Activated B cell treated with CpG ODN at 0.5 μM for 24 hours (primary cell): ENCODE measurements at regions of chr2 and their contacts with region 1.

Region 1: GRCh38 chr2:208265801-208266552 is at the start of gene PIKFYVE:
- DNase-seq: peak; percentile 85
- ATAC-seq: peak; percentile 87
- H3K4me3 Mint-ChIP-seq: peak within 1 kb of the TSS; percentile 95
- H3K27ac Mint-ChIP-seq: peak within 1 kb of the TSS; percentile 95
- H3K4me1 Mint-ChIP-seq: peaks cover 56% of the 10 kb centered on the region
- H3K27me3 Mint-ChIP-seq: no peaks in the 10 kb centered on the region
- CTCF ChIP-seq: no peak
- total RNA-seq, gene PIKFYVE: 92.2 and 106 TPM in 2 replicates

Region 2: DNA sequence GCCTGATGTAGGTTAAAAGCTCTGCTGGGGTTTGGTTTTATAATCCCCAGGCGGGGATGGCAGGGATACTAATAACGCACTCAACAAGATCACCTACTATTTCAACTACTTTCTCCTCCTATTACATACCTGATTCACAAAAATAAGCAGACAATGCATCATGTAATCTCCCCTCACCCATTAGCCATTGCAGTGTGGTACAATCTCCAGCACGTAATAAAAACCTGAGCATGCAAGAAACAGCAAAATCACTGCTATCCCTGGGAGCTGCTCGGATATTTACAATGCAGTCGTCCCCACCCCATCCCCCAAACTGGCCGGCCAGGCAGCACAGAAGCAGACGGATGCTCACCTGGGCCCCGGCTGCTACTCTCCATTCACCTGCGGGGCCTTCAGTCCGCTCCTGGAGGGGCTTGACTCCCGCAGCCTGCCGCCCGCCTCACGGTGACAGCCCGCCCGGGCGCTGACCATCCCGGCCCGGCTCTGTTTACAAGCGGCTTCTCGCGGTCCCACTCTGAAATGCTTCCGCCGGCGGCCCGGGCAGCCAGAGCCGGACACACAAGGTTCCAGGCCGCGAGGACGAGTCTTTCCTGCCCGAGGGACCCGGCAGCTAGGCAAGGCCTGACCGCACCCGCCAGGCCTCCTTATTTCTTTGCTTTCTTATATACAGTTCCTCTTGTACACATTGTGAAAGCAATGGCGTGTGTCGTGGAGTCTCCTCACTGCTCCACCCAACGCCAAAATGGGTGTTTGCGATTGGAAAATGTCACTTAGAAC is 240.8 kb before region 1 on chr2 and contains the start of gene PLEKHM3:
- CTCF ChIA-PET with region 1: no interaction called
- POLR2A ChIA-PET with region 1: no interaction called
- intact Hi-C with region 1: loop called (anchors 5 kb)
- DNase-seq: peak; percentile 76
- ATAC-seq: peak; percentile 91
- H3K4me3 Mint-ChIP-seq: peak within 1 kb of the TSS; percentile 86
- H3K27ac Mint-ChIP-seq: peak within 1 kb of the TSS; percentile 92
- H3K4me1 Mint-ChIP-seq: peaks cover 20% of the 10 kb centered on the region
- H3K27me3 Mint-ChIP-seq: no peaks in the 10 kb centered on the region
- CTCF ChIP-seq: no peak
- total RNA-seq, gene PLEKHM3: 12.0 and 12.2 TPM in 2 replicates

Region 3: DNA sequence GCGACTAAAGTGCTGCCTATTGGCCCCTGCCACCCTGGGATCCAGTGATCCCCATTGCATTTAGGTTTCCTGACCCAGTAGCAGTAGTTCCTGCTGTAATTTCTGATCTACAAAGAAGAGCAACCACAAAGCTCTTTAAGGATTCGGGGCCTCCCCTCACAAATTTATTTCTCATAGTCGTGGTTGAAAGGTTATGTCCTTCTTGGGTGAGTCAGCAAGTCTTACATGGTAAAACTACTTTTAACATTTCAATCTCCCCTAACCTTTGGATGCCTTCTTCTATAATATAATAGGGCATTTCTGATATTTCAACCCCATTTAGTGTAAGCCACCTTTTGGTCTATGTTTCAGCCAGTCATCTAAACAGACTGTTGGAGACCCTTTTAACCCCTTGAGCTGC is 15.0 kb after region 1 on chr2:
- CTCF ChIA-PET with region 1: interaction called, 6 read pairs
- POLR2A ChIA-PET with region 1: interaction called, 7 read pairs
- intact Hi-C with region 1: loop called (anchors 1 kb)
- DNase-seq: no peak
- ATAC-seq: peak; percentile 62
- H3K4me3 Mint-ChIP-seq: no peak overlapping the region
- H3K27ac Mint-ChIP-seq: peak overlapping the region; percentile 60
- H3K4me1 Mint-ChIP-seq: peaks cover 32% of the 10 kb centered on the region
- H3K27me3 Mint-ChIP-seq: no peaks in the 10 kb centered on the region
- CTCF ChIP-seq: no peak

Region 4: GRCh38 chr2:208294482-208295024 is 28.6 kb after region 1 on chr2:
- CTCF ChIA-PET with region 1: no interaction called
- POLR2A ChIA-PET with region 1: interaction called, 4 read pairs
- intact Hi-C with region 1: loop called (anchors 1 kb)
- DNase-seq: no peak
- ATAC-seq: peak; percentile 85
- H3K4me3 Mint-ChIP-seq: peak overlapping the region; percentile 52
- H3K27ac Mint-ChIP-seq: peak overlapping the region; percentile 90
- H3K4me1 Mint-ChIP-seq: peaks cover 65% of the 10 kb centered on the region
- H3K27me3 Mint-ChIP-seq: no peaks in the 10 kb centered on the region
- CTCF ChIP-seq: no peak

Region 5: GRCh38 chr2:208315081-208315788 is 49.3 kb after region 1 on chr2:
- CTCF ChIA-PET with region 1: interaction called, 8 read pairs
- POLR2A ChIA-PET with region 1: interaction called, 80 read pairs
- intact Hi-C with region 1: loop called (anchors 1 kb)
- DNase-seq: no peak
- ATAC-seq: peak; percentile 54
- H3K4me3 Mint-ChIP-seq: peak overlapping the region; percentile 89
- H3K27ac Mint-ChIP-seq: peak overlapping the region; percentile 93
- H3K4me1 Mint-ChIP-seq: peaks cover 77% of the 10 kb centered on the region
- H3K27me3 Mint-ChIP-seq: no peaks in the 10 kb centered on the region
- CTCF ChIP-seq: no peak

Region 6: GRCh38 chr2:208320686-208321085 is 54.7 kb after region 1 on chr2:
- CTCF ChIA-PET with region 1: interaction called, 8 read pairs
- POLR2A ChIA-PET with region 1: interaction called, 80 read pairs
- intact Hi-C with region 1: loop called (anchors 1 kb)
- DNase-seq: no peak
- ATAC-seq: peak; percentile 82
- H3K4me3 Mint-ChIP-seq: peak overlapping the region; percentile 62
- H3K27ac Mint-ChIP-seq: peak overlapping the region; percentile 74
- H3K4me1 Mint-ChIP-seq: peaks cover 70% of the 10 kb centered on the region
- H3K27me3 Mint-ChIP-seq: no peaks in the 10 kb centered on the region
- CTCF ChIP-seq: no peak

Region 7: DNA sequence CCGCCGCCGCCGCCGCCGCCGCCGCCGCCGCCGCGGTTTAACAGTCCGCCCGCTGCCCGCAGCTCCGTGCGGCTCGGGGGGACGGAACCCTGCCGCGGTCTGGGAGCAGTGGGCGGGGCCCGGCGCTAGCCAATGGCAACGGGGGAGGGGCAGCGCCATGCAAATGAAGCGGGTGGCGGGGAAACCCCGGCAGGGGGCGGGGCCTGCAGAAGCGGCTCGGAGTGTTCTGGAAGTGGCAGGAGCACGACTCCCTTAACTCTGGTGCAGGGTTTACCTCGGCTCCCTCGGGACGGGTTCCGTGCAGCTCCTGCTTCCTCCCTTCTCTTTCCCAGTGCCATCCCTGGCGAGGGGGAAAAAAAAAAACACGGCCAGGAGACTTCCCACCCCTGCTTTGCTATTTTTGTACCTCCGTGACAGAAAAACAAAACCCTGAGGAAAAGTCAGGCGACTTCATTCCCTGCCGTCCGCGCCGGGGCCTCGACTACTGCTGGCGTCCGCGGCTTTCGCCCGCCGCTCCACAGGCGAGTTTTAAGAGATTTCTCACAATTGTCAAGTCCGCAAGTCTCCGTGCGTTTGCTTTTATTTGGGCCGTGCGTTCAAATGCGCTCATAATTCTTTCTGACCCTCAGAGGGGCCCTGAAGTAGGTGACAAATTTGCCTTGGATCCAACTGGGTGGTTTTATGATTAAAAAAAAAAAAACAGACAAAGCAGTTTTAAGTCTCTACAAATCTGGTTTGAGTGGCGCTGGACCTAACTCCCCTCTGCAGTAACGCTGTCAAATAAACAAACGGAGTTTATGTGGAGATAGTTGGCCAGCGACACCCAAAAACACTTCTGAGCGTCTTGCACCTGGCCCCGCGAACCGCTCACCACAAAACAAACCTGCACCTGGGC is 1905.6 kb after region 1 on chr2 and contains the start of gene KANSL1L:
- CTCF ChIA-PET with region 1: no interaction called
- POLR2A ChIA-PET with region 1: no interaction called
- intact Hi-C with region 1: loop called (anchors 2 kb)
- DNase-seq: peak; percentile 99
- ATAC-seq: peak; percentile 83
- H3K4me3 Mint-ChIP-seq: peak within 1 kb of the TSS; percentile 97
- H3K27ac Mint-ChIP-seq: peak within 1 kb of the TSS; percentile 94
- H3K4me1 Mint-ChIP-seq: peaks cover 24% of the 10 kb centered on the region
- H3K27me3 Mint-ChIP-seq: peaks cover 8% of the 10 kb centered on the region
- CTCF ChIP-seq: no peak
- total RNA-seq, gene KANSL1L: 13.1 and 14.2 TPM in 2 replicates